OCI-LY7 (cell line): ENCODE measurements at regions of chr17 and their contacts with region 1.

Region 1: DNA sequence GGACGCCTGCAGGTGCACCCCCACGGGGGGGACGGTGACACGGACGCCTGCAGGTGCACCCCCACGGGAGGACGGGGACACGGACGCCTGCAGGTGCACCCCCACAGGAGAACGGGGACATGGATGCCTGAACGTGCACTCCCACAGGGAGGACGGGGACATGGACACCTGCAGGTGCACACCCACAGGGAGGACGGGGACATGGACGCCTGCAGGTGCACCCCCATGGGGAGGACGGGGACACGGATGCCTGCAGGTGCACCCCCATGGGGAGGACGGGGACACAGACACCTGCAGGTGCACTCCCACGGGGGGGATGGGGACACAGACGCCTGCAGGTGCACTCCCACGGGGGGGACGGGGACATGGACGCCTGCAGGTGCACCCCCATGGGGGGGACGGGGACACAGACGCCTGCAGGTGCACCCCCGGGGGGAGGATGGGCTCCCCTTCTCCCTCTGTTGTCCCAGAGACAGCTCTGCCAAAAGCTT is 114.5 kb upstream of the METRNL start:
- DNase-seq: peak; percentile 52
- H3K4me3 ChIP-seq: no peak overlapping the region
- H3K27ac ChIP-seq: peak overlapping the region; percentile 32
- H3K4me1 ChIP-seq: peaks cover 68% of the 10 kb centered on the region
- CTCF ChIP-seq: no peak

Region 2: GRCh38 chr17:83051395-83052233 is 86.7 kb after region 1 on chr17:
- CTCF ChIA-PET with region 1: no interaction called
- POLR2A ChIA-PET with region 1: no interaction called
- intact Hi-C with region 1: loop called (anchors 2 kb)
- DNase-seq: peak; percentile 99
- H3K4me3 ChIP-seq: peak overlapping the region; percentile 74
- H3K27ac ChIP-seq: peak overlapping the region; percentile 75
- H3K4me1 ChIP-seq: peaks cover 31% of the 10 kb centered on the region
- CTCF ChIP-seq: no peak

Region 3: DNA sequence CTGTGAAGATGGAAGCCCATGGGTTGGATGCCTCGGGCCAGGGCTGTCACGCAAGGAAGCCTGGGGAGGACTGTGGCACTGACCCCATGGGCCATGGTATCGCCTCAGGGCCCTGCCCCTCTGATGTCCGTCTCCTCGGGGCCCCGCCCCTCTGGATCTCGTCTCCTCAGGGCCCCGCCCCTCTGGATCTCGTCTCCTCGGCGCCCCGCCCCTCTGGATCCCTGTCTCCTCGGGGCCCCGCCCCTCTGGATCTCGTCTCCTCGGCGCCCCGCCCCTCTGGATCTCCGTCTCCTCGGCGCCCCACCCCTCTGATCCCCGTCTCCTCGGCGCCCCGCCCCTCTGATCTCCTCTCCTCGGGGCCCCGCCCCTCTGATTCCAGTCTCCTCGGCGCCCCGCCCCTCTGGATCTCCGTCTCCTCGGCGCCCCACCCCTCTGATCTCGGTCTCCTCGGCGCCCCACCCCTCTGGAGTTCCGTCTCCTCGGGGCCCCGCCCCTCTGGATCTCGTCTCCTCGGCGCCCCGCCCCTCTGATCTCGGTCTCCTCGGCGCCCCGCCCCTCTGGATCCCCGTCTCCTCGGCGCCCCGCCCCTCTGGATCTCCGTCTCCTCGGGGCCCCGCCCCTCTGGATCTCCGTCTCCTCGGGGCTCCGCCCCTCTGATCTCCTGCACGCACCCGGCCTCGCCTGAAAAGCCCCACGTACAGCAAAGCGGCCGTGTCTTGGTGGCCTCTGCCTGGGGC is 138.5 kb after region 1 on chr17:
- CTCF ChIA-PET with region 1: no interaction called
- POLR2A ChIA-PET with region 1: no interaction called
- intact Hi-C with region 1: loop called (anchors 5 kb)
- DNase-seq: peak; percentile 30
- H3K4me3 ChIP-seq: no peak overlapping the region
- H3K27ac ChIP-seq: no peak overlapping the region
- H3K4me1 ChIP-seq: peaks cover 43% of the 10 kb centered on the region
- CTCF ChIP-seq: no peak